GM23248 (cell line): ENCODE measurements at regions of chr4 and their contacts with region 1.

Region 1: GRCh38 chr4:39697740-39698423 is at the start of gene UBE2K:
- DNase-seq: peak; percentile 96
- H3K4me3 ChIP-seq: peak within 1 kb of the TSS; percentile 91
- H3K27ac ChIP-seq: peak within 1 kb of the TSS; percentile 90
- H3K4me1 ChIP-seq: peaks cover 29% of the 10 kb centered on the region
- H3K27me3 ChIP-seq: no peaks in the 10 kb centered on the region
- total RNA-seq, gene UBE2K: 22.3 and 26.7 TPM in 2 replicates

Region 2: DNA sequence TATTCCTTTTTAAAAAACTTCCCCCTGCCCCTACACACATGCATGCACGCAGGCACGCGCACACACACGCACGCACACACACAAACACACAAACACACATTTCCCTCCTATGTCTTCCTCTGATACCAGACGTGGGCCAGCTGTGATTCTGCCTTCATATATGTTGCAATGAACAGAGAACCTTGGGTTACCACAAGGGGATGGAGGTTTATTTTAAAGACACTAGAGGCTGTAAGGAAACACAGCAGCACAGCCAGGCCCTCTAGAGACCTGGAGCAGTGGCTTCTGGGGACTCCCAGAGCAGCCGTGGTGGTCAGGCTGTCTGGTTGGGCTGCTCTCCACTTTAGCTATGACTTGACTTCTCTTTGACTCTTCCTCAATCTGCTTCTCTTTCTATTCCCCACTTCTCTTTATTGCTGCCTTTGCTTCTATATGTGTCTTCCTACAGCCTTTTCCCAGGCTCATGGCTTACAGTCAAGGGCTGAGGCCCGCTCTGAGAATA is 911.9 kb before region 1 on chr4:
- in situ Hi-C with region 1: no loop called
- DNase-seq: no peak
- H3K4me3 ChIP-seq: no peak overlapping the region
- H3K27ac ChIP-seq: no peak overlapping the region
- H3K4me1 ChIP-seq: no peaks in the 10 kb centered on the region
- H3K27me3 ChIP-seq: no peaks in the 10 kb centered on the region

Region 3: DNA sequence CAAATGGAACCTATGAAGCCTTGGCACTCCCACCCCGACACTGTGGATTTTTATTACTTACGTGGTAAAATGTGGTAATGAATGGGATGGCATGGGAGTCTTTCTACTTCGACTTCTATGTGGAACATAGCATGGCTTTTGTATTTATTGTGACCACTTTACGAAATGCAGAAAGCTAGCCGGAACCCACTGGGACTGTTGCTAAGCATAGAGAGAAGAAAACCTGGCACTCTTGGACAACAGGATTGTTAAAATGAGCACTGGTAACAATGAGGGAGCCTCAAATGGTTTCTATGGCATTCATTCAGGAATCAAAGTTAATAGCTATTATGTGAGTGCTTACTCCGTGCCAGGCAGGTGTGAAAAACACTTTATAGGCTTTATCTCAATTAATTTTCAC is 166.5 kb after region 1 on chr4:
- in situ Hi-C with region 1: no loop called
- DNase-seq: no peak
- H3K4me3 ChIP-seq: no peak overlapping the region
- H3K27ac ChIP-seq: no peak overlapping the region
- H3K4me1 ChIP-seq: no peaks in the 10 kb centered on the region
- H3K27me3 ChIP-seq: no peaks in the 10 kb centered on the region

Region 4: GRCh38 chr4:40309250-40309774 is 611.4 kb after region 1 on chr4:
- in situ Hi-C with region 1: loop called (anchors 25 kb)
- DNase-seq: peak; percentile 86
- H3K4me3 ChIP-seq: peak overlapping the region; percentile 58; the same call in 1 of the 2 replicates
- H3K27ac ChIP-seq: no peak overlapping the region
- H3K4me1 ChIP-seq: no peaks in the 10 kb centered on the region
- H3K27me3 ChIP-seq: no peaks in the 10 kb centered on the region